ENCODE measurements at regions of chr2 and their contacts with region 1.

Region 1: DNA sequence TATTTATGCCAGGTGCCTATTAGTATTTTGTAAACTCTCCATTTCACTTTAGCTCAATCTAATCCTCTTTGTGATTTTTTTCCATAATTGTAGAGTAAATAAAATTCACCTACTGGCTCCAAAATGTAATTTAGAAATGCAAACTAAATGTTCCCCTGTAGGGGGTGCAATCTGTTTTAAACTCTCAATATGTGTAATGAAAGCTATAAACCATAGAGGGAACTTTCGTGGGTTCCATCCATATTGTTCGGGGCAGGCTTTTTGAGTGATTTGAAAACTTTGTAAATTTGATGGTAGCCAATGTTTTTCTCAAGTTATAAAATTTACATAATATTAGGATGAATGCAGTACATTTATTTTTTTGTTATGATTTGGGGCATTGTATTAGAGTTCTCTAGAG is 49.4 kb downstream of the TSPYL6 start:
- DNase-seq: peak; percentile 68
- ATAC-seq: peak; percentile 46; the same call in 1 of the 2 replicates
- H3K4me3 ChIP-seq: no peak overlapping the region
- H3K27ac ChIP-seq: no peak overlapping the region
- H3K4me1 ChIP-seq: no peaks in the 10 kb centered on the region
- H3K27me3 ChIP-seq: no peaks in the 10 kb centered on the region
- CTCF ChIP-seq: peak; percentile 84

Region 2: GRCh38 chr2:53584986-53585385 is 621.6 kb before region 1 on chr2:
- CTCF ChIA-PET with region 1: no interaction called
- POLR2A ChIA-PET with region 1: no interaction called
- intact Hi-C with region 1: no loop called
- DNase-seq: no peak
- ATAC-seq: no peak
- H3K4me3 ChIP-seq: no peak overlapping the region
- H3K27ac ChIP-seq: no peak overlapping the region
- H3K4me1 ChIP-seq: no peaks in the 10 kb centered on the region
- H3K27me3 ChIP-seq: no peaks in the 10 kb centered on the region
- CTCF ChIP-seq: no peak

Region 3: GRCh38 chr2:53672881-53673522 is 533.6 kb before region 1 on chr2:
- CTCF ChIA-PET with region 1: no interaction called
- POLR2A ChIA-PET with region 1: no interaction called
- intact Hi-C with region 1: no loop called
- DNase-seq: no peak
- ATAC-seq: no peak
- H3K4me3 ChIP-seq: no peak overlapping the region
- H3K27ac ChIP-seq: no peak overlapping the region
- H3K4me1 ChIP-seq: peaks cover 3% of the 10 kb centered on the region; the same call in 1 of the 2 replicates
- H3K27me3 ChIP-seq: no peaks in the 10 kb centered on the region
- CTCF ChIP-seq: no peak

Region 4: DNA sequence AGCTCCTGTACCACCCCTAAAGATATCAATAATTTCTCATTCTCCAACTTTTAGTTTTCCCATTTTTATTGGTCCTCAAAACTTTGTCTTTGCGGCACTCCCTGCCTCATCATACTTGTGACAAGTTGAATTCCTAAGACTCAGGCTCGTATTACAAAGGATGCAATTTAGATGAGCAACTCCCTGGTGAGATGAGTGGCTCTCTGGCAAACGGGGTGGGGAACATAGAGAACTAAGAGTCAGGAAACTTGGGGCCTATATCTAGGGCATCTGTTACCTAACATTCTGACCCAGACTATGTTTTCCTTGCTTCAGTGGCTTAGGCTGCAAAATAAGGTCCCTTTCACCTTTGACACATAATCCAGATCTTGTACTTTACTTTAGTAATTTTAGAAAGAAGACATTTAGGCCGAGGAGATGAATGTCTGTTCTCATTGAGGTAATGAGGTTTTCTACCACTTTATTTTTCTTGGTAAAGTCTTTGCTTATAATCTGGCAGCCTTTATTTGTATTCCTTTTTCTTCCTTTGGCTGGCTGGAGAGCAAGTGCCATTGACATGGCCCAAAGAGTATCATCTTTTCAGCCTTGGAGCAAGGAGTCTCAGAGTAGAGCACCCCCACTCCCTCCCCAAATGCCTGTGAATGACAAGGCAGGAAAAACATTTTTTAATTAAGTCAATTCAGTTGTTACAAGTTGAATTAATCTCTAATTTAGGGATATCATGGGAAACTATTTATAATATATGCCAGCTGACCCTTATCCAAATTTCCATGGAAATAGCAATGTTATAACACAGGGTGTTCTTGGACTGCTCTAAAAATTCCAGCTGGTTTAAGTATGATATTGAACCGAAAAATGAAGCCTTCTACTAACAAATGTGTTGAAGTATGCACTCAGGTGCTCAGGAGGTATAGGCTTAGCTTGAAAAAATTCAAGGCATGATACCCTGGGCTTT is 34.2 kb after region 1 on chr2:
- CTCF ChIA-PET with region 1: no interaction called
- POLR2A ChIA-PET with region 1: no interaction called
- intact Hi-C with region 1: no loop called
- DNase-seq: peak; percentile 34
- ATAC-seq: peak; percentile 68
- H3K4me3 ChIP-seq: no peak overlapping the region
- H3K27ac ChIP-seq: no peak overlapping the region
- H3K4me1 ChIP-seq: no peaks in the 10 kb centered on the region
- H3K27me3 ChIP-seq: no peaks in the 10 kb centered on the region
- CTCF ChIP-seq: no peak

Region 5: GRCh38 chr2:54310311-54310710 is 103.7 kb after region 1 on chr2:
- CTCF ChIA-PET with region 1: no interaction called
- POLR2A ChIA-PET with region 1: no interaction called
- intact Hi-C with region 1: loop called (anchors 10 kb)
- DNase-seq: peak; percentile 14
- ATAC-seq: no peak
- H3K4me3 ChIP-seq: no peak overlapping the region
- H3K27ac ChIP-seq: no peak overlapping the region
- H3K4me1 ChIP-seq: no peaks in the 10 kb centered on the region
- H3K27me3 ChIP-seq: 0 out of 2 replicates have a peak, but pooled peaks cover 3% of the 10 kb centered on the region
- CTCF ChIP-seq: no peak